GM12878 (cell line): ENCODE measurements at regions of chr14 and their contacts with region 1.

Region 1: DNA sequence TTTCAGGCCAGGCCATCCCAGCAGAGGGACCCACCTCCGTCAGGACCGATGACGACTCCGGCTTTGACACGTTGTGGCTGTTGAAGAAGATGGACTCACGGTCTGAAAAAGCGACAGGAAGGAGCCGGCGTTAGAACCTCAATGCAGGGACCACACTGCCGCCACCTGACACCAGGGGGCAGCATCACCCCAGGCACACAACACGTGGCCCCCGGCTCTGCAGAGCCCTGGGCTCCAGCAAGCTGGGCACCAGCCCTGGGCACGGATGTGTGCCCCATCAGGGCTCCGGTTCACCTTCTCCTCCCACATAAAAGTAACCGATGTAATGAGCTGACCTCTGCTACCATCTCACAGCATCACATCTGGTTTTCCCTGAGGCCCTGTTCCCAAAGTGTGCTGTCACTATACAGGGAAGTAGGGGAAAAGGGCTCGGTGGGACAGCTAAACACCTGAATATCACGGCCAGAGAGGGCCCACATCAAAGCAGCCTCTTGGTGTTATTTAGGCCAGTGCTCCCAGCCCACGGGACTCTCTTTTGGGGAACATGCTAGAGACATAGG is 29.0 kb downstream of the CHGA start:
- DNase-seq: peak; percentile 37
- ATAC-seq: peak; percentile 100
- H3K4me3 ChIP-seq: no peak overlapping the region
- H3K27ac ChIP-seq: no peak overlapping the region
- H3K4me1 ChIP-seq: no peaks in the 10 kb centered on the region; the same call in 1 of the 2 replicates
- H3K27me3 ChIP-seq: no peaks in the 10 kb centered on the region
- CTCF ChIP-seq: peak; percentile 86 to 97 (median 95); a peak in 5 of 6 replicates
- EP300 ChIP-seq: no peak
- POLR2A ChIP-seq: no peak
- RAD21 ChIP-seq: peak; percentile 94

Region 2: DNA sequence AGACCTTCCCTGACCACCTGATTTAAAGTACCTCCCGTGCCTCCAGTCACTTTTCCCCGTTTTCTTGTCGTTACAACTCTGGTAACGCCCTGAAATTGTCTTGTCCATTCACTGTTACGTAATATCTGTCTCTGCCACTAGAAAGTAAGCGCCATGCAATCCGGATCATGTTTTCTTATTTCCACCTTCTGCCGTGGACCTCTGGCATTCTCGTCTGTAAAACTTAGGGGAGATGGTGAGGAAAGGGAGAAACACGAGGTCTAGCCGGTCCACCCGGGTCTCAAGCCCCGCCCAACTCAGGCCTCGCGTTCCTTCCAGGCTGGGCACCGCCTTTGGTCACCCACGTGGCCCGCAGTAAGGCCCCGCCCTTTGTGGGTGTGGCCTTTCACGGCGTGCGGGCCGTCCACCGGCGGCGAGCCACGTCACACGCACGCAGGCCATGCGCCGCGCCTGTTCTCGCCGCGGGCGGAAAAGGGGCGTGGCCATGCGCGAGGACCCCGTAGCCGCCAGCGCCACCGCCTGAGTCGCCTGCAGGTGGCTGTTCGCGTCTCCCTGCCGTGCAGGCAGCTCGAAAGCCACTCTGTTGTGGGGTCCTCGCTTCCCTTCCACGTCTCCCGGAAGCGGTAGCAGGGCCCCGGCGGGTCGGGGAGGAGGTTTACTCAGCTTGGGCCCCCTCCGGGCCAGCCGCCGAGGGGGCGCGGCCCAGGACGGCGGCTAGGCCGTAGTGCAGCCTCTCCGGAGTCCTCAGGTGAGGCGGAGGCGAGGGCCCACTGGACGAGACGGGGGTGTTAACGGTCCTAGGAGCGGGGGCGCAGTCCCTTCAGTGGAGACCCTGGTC is 158.1 kb before region 1 on chr14 and contains the start of gene GOLGA5:
- CTCF ChIA-PET with region 1: no interaction called
- POLR2A ChIA-PET with region 1: no interaction called
- RAD21 ChIA-PET with region 1: no interaction called
- SMC1A ChIA-PET with region 1: no interaction called
- in situ Hi-C with region 1: no loop called
- intact Hi-C with region 1: no loop called
- DNase-seq: peak; percentile 95
- ATAC-seq: peak; percentile 97
- H3K4me3 ChIP-seq: peak within 1 kb of the TSS; percentile 83
- H3K27ac ChIP-seq: peak within 1 kb of the TSS; percentile 93
- H3K4me1 ChIP-seq: peaks cover 8% of the 10 kb centered on the region
- H3K27me3 ChIP-seq: no peaks in the 10 kb centered on the region
- CTCF ChIP-seq: no peak
- EP300 ChIP-seq: peak; percentile 69 to 77; a peak in 3 of 4 replicates
- POLR2A ChIP-seq: peak; percentile 90
- RAD21 ChIP-seq: no peak
- polyA plus RNA-seq, gene GOLGA5: 10.9 to 13.9 TPM

Region 3: GRCh38 chr14:92863286-92864080 is 88.5 kb before region 1 on chr14:
- CTCF ChIA-PET with region 1: no interaction called
- POLR2A ChIA-PET with region 1: no interaction called
- RAD21 ChIA-PET with region 1: no interaction called
- SMC1A ChIA-PET with region 1: no interaction called
- in situ Hi-C with region 1: no loop called
- intact Hi-C with region 1: no loop called
- DNase-seq: no peak
- ATAC-seq: no peak
- H3K4me3 ChIP-seq: no peak overlapping the region
- H3K27ac ChIP-seq: no peak overlapping the region
- H3K4me1 ChIP-seq: no peaks in the 10 kb centered on the region
- H3K27me3 ChIP-seq: no peaks in the 10 kb centered on the region
- CTCF ChIP-seq: no peak
- EP300 ChIP-seq: no peak
- POLR2A ChIP-seq: no peak
- RAD21 ChIP-seq: no peak

Region 4: DNA sequence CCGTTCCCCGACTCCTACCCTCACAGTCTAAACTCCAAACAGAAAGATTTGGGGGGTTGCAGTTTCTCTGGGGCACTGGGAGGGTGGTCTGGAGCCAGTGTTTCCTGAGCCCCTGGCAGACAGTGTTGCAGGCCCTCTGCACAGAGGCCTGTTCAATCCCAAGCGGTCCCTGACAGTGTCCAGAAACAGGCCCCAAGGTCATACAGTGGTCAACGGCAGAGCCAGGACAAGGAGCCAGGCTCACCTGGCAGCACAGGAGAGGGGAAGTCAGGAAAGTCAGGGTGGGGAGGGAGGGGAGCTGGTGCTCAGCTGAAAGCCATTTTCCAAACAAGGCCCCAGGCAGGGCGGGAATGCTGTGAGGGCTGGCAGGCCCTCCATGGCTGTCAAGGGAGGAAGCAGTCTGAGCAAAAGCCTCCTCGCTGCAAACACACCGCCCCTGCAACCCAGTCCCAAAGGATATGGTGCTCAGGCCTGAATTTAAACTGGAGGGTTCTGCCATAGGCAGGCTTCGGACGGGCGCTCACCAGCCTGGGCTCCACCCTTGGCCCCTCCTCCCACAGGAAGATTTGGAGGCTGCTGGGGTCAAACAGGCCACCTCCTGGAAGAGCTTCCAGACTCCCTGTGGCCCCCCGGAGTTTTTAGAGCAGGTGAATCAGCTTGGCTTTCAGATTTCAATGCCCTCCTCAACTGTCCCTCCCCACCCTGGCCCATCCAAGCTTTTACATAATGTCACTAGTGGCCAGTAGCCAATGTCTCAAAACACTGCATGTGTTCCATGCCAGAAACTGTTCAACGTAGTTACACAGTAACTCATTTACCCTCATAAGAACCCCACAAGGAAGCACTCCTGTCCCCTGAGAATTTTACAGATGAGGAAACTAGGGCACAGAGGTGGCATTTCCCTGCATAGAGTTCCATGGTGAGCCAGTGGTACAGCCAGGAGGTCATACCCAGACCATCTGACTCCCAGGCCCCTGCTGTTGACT is 12.4 kb after region 1 on chr14:
- CTCF ChIA-PET with region 1: interaction called, 11 read pairs
- POLR2A ChIA-PET with region 1: interaction called, 3 read pairs
- RAD21 ChIA-PET with region 1: no interaction called
- SMC1A ChIA-PET with region 1: interaction called, 4 read pairs
- in situ Hi-C with region 1: no loop called
- intact Hi-C with region 1: no loop called
- DNase-seq: no peak
- ATAC-seq: peak; percentile 31; the same call in 2 of the 3 replicates
- H3K4me3 ChIP-seq: no peak overlapping the region
- H3K27ac ChIP-seq: no peak overlapping the region
- H3K4me1 ChIP-seq: no peaks in the 10 kb centered on the region
- H3K27me3 ChIP-seq: no peaks in the 10 kb centered on the region
- CTCF ChIP-seq: no peak
- EP300 ChIP-seq: no peak
- POLR2A ChIP-seq: no peak
- RAD21 ChIP-seq: no peak

Region 5: GRCh38 chr14:92997343-92998061 is 45.5 kb after region 1 on chr14:
- CTCF ChIA-PET with region 1: no interaction called
- POLR2A ChIA-PET with region 1: no interaction called
- RAD21 ChIA-PET with region 1: no interaction called
- SMC1A ChIA-PET with region 1: no interaction called
- in situ Hi-C with region 1: no loop called
- intact Hi-C with region 1: no loop called
- DNase-seq: no peak
- ATAC-seq: no peak
- H3K4me3 ChIP-seq: no peak overlapping the region
- H3K27ac ChIP-seq: no peak overlapping the region
- H3K4me1 ChIP-seq: no peaks in the 10 kb centered on the region
- H3K27me3 ChIP-seq: no peaks in the 10 kb centered on the region
- CTCF ChIP-seq: no peak
- EP300 ChIP-seq: no peak
- POLR2A ChIP-seq: no peak
- RAD21 ChIP-seq: no peak

Region 6: DNA sequence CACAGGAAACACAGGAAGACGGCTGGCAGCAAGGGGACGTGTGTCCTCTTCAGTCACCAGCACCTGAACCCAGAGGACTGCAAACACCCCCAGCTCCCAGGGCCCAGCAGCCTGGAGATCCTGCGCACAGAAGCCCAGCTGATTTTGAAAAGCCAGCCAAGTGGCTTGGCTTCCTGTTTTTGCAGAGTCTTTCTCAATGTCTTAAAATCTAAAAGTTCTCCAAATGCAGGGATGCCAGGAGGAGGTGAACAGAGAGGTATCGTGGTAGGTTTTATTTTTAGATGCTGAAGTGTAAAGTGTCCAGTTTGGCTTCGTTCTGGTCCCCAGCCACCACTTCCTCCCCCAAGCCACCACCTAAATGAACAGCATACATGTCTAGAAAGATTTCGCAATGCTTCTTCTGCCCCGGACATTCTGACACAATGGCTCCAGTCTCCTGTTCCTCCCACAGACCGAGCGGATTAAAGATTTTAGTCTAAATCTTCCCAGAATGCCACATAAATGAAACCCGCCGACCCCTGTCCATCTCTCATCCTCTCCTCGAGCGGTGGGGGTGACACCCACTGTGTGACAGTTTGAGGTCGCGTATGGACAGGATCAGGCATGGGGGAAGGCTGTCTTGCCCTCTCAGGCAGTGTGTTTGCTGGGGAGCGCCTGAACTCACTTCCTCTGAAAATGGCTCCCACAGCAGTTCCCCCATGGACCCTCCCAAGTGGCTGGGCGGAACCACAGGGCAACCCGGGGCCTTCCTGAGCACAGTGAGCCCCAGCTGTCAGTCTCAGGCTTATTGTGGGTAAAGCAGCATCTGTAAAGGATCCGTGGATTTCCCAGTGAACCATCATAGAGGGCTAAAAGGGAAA is 122.1 kb after region 1 on chr14:
- CTCF ChIA-PET with region 1: interaction called, 10 read pairs
- POLR2A ChIA-PET with region 1: no interaction called
- RAD21 ChIA-PET with region 1: interaction called, 13 read pairs
- SMC1A ChIA-PET with region 1: interaction called, 4 read pairs
- in situ Hi-C with region 1: no loop called
- intact Hi-C with region 1: no loop called
- DNase-seq: no peak
- ATAC-seq: peak; percentile 57
- H3K4me3 ChIP-seq: peak overlapping the region; percentile 17; the same call in 1 of the 2 replicates
- H3K27ac ChIP-seq: peak overlapping the region; percentile 81
- H3K4me1 ChIP-seq: peaks cover 33% of the 10 kb centered on the region
- H3K27me3 ChIP-seq: no peaks in the 10 kb centered on the region
- CTCF ChIP-seq: no peak
- EP300 ChIP-seq: no peak
- POLR2A ChIP-seq: peak; percentile 54
- RAD21 ChIP-seq: no peak

Region 7: DNA sequence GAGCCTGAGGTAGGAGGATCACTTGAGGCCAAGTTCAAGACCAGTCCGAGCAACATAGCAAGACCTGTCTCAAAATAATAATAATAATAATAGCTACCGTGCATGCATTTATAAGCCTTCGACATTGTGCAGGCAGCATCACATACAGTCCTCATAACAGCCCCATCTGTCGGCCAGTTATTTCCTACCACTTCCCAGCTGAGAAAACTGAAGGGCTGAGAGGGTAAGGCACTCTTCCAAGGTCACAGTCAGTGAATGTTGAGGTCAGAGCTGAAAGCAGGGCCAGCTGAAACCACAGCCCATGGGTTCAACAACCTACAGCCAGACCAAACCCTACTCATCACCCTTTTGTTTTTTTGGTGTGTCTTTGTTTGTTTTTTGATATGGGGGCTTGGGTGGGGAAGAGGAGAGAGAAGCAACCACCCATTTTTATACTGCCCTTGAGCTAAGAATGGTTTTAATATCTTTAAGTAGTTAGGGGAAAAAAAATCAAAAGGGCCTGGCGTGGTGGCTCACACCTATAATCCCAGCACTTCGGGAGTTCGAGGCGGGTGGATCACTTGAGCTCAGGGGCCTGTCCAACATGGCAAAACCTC is 180.6 kb after region 1 on chr14:
- CTCF ChIA-PET with region 1: interaction called, 42 read pairs
- POLR2A ChIA-PET with region 1: no interaction called
- RAD21 ChIA-PET with region 1: interaction called, 26 read pairs
- SMC1A ChIA-PET with region 1: interaction called, 17 read pairs
- in situ Hi-C with region 1: loop called (anchors 5 kb)
- intact Hi-C with region 1: no loop called
- DNase-seq: no peak
- ATAC-seq: peak; percentile 94
- H3K4me3 ChIP-seq: no peak overlapping the region
- H3K27ac ChIP-seq: no peak overlapping the region
- H3K4me1 ChIP-seq: no peaks in the 10 kb centered on the region
- H3K27me3 ChIP-seq: no peaks in the 10 kb centered on the region
- CTCF ChIP-seq: peak; percentile 51 to 64 (median 62)
- EP300 ChIP-seq: no peak
- POLR2A ChIP-seq: no peak
- RAD21 ChIP-seq: peak; percentile 58

Region 8: GRCh38 chr14:93137864-93138263 is 185.9 kb after region 1 on chr14:
- CTCF ChIA-PET with region 1: interaction called, 42 read pairs
- POLR2A ChIA-PET with region 1: no interaction called
- RAD21 ChIA-PET with region 1: interaction called, 26 read pairs
- SMC1A ChIA-PET with region 1: interaction called, 18 read pairs
- in situ Hi-C with region 1: loop called (anchors 5 kb)
- intact Hi-C with region 1: loop called (anchors 1 kb)
- DNase-seq: no peak
- ATAC-seq: no peak
- H3K4me3 ChIP-seq: no peak overlapping the region
- H3K27ac ChIP-seq: no peak overlapping the region
- H3K4me1 ChIP-seq: no peaks in the 10 kb centered on the region
- H3K27me3 ChIP-seq: no peaks in the 10 kb centered on the region
- CTCF ChIP-seq: no peak
- EP300 ChIP-seq: no peak
- POLR2A ChIP-seq: no peak
- RAD21 ChIP-seq: no peak

Region 9: GRCh38 chr14:93173943-93174395 is 222.0 kb after region 1 on chr14:
- CTCF ChIA-PET with region 1: interaction called, 5 read pairs
- POLR2A ChIA-PET with region 1: no interaction called
- RAD21 ChIA-PET with region 1: interaction called, 3 read pairs
- SMC1A ChIA-PET with region 1: interaction called, 3 read pairs
- in situ Hi-C with region 1: no loop called
- intact Hi-C with region 1: loop called (anchors 1 kb)
- DNase-seq: no peak
- ATAC-seq: peak; percentile 42
- H3K4me3 ChIP-seq: no peak overlapping the region
- H3K27ac ChIP-seq: no peak overlapping the region
- H3K4me1 ChIP-seq: no peaks in the 10 kb centered on the region
- H3K27me3 ChIP-seq: no peaks in the 10 kb centered on the region
- CTCF ChIP-seq: no peak
- EP300 ChIP-seq: no peak
- POLR2A ChIP-seq: no peak
- RAD21 ChIP-seq: no peak

Region 10: DNA sequence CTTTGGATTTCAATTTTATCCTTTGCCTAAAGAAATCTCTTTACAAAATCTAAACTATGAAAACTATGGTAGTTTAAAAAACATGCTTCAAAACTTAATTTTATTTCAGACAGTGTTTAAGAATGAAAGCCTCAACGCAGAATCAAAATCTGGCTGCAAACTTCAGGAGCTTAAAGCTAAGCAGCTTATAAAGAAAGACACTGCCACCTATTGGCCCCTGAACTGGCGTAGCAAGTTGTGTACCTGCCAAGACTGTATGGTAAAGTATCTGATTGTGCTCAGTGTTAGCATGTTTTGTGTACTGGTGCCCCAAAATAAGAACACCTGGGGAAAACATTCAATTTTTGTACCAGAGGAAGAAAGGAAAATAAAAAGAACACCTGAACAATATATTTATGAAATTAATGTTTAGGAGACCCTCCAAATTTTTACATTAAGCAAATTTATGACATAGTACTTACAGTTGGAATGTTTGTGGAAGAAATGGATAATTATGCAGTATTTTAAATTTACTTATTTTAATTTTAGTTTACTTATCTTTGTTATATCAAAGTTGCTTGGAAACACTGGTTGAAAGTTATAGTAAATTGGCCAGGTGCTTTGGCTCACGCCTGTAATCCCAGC is 267.2 kb after region 1 on chr14:
- CTCF ChIA-PET with region 1: interaction called, 4 read pairs
- POLR2A ChIA-PET with region 1: no interaction called
- RAD21 ChIA-PET with region 1: interaction called, 3 read pairs
- SMC1A ChIA-PET with region 1: no interaction called
- in situ Hi-C with region 1: no loop called
- intact Hi-C with region 1: loop called (anchors 5 kb)
- DNase-seq: no peak
- ATAC-seq: peak; percentile 98
- H3K4me3 ChIP-seq: no peak overlapping the region
- H3K27ac ChIP-seq: no peak overlapping the region
- H3K4me1 ChIP-seq: no peaks in the 10 kb centered on the region
- H3K27me3 ChIP-seq: no peaks in the 10 kb centered on the region
- CTCF ChIP-seq: peak; percentile 74 to 87 (median 75)
- EP300 ChIP-seq: no peak
- POLR2A ChIP-seq: no peak
- RAD21 ChIP-seq: peak; percentile 84